Right ventricle myocardium inferior (tissue), 1 donor: ENCODE measurements at regions of chr17 and their contacts with region 1.

Region 1: DNA sequence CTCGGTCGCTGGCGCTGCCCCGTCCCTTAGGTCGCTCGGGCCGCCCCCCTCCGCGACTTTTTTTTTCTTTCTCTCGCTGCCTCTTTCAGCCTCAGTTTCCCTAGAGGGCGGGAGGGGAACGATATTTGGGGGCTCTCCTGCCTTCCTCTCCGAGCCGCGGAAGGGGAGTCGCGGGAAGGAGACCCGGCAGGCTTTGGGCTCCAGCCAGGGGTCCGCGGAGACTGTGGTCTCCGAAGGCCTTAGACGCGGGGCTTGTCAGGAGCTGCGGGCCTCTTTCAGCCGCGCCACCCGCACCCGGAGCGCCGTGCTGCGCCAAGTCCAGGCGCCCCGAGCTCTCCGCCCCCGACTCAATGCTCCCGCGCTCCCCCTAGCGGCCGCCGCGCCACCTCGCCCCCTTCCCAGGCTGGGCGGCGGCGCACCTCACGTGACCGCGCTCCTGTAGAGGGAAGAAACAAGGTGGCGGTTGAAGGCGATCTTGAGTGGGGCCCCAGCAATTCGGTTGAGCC is at the start of gene LRRC37B:
- DNase-seq: peak; percentile 96
- ATAC-seq: peak; percentile 99
- total RNA-seq, gene LRRC37B: 3.2 TPM

Region 2: GRCh38 chr17:31967648-31968047 is 39.4 kb before region 1 on chr17:
- intact Hi-C with region 1: no loop called
- DNase-seq: no peak
- ATAC-seq: no peak

Region 3: GRCh38 chr17:32020943-32021614 is 14.1 kb after region 1 on chr17:
- intact Hi-C with region 1: no loop called
- DNase-seq: no peak
- ATAC-seq: no peak

Region 4: DNA sequence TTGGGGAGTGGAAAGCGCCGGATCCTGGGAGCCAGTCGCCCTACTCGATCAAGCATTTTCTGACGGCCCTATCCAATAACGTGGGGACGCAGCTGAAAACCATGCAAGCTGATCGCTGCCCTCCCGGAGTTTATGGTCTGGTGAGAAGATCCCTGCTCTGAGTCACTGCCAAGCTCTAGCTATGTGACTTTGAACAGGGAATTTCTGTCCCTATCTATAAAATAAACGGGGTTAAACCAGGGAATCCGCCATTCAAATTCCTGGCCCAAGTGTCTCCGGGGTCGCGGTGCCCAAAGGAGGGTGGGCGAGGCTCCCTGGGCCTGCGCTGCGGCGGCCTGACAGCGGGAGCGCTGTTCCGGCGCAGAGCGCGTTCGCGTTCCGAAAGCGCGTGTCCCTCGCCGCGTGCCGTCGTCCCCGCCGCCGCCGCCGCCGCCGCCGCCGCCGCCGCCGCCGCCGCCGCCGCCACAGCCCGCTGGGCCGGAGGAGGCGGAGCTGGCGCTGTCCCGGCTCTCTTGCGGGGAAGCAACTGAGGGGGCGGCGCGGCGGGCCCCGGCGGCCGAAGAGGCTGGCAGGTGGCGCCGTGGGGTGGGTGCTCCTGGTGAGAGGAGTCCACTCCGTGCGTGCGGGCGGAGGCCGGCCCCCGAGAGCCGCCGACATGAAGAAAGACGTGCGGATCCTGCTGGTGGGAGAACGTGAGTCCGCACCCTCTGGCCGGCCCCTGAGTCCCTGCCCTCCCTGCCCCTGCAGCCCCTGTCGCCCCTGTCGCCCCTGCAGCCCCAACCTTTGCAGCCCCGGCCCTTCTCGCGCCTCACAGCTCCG is 135.2 kb after region 1 on chr17 and contains the start of gene RHOT1:
- intact Hi-C with region 1: loop called (anchors 1 kb)
- DNase-seq: peak; percentile 89
- ATAC-seq: peak; percentile 76
- total RNA-seq, gene RHOT1: 64.1 TPM

Region 5: DNA sequence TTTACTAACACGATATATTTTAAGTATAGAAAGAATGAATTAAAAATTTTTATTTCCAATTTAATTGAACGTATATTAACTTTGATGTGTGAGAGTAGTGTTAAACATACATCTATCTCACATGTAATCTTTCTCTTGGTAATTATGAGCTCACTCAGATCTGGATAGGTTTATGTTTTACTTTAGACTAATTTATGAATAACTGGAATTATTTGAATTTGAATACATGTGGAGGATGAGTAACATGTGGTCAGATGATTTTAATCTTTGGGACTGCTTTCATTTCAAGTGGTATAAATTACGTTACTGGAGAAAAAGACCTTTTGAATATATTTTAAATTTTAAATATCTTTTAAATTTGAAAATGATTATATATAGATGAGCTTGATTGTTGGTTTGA is 208.7 kb after region 1 on chr17:
- intact Hi-C with region 1: loop called (anchors 10 kb)
- DNase-seq: no peak
- ATAC-seq: no peak